Head of caudate nucleus (tissue), 42 donors: ENCODE measurements at regions of chr11 and their contacts with region 1.

Region 1: GRCh38 chr11:118659314-118659952 is 20.0 kb downstream of the TREH start:
- DNase-seq: peak; percentile 82 to 97 (median 92)

Region 2: DNA sequence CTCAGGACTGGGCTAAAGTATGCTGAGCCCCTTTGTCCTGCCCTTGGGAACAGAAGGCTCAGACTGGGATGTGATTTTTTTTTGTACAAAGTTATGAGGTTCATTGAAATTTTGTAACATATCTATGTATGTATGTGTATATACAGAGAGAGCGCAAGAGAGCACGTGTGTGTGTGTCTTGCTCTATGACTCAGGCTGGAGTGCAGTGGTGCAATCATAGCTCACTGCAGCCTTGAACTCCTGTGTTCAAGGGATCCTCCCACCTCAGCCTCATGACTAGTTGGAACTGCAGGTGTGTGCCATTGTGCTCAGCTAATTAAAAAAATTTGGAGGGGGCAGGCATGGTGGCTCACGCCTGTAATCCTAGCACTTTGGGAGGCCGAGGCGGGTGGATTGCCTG is 122.7 kb before region 1 on chr11:
- intact Hi-C with region 1: no loop called
- DNase-seq: no peak

Region 3: GRCh38 chr11:118607401-118608359 is 51.8 kb before region 1 on chr11 and contains the start of gene PHLDB1:
- intact Hi-C with region 1: loop called (anchors 5 kb)
- DNase-seq: peak; percentile 69 to 94 (median 86)